HCT116 (cell line): ENCODE measurements at regions of chr1 and their contacts with region 1.

Region 1: GRCh38 chr1:90964444-90965035 is 57.3 kb downstream of the ZNF644 start:
- DNase-seq: peak; percentile 13
- ATAC-seq: peak; percentile 61; the same call in 1 of the 2 replicates
- H3K4me3 ChIP-seq: no peak overlapping the region
- H3K27ac ChIP-seq: no peak overlapping the region
- H3K4me1 ChIP-seq: 0 out of 4 replicates have a peak, but pooled peaks cover 0 to 3% of the 10 kb centered on the region in 2 experiments
- H3K27me3 ChIP-seq: no peaks in the 10 kb centered on the region
- CTCF ChIP-seq: peak; percentile 23 to 55 (median 42); a peak in 4 of 6 replicates
- POLR2A ChIP-seq: no peak
- RAD21 ChIP-seq: peak; percentile 59

Region 2: GRCh38 chr1:90114521-90115141 is 849.9 kb before region 1 on chr1:
- CTCF ChIA-PET with region 1: interaction called, 3 read pairs
- POLR2A ChIA-PET with region 1: no interaction called
- RAD21 ChIA-PET with region 1: no interaction called
- intact Hi-C with region 1: loop called (anchors 5 kb)
- DNase-seq: peak; percentile 56
- ATAC-seq: peak; percentile 74; the same call in 1 of the 2 replicates
- H3K4me3 ChIP-seq: no peak overlapping the region
- H3K27ac ChIP-seq: no peak overlapping the region
- H3K4me1 ChIP-seq: no peaks in the 10 kb centered on the region
- H3K27me3 ChIP-seq: peaks cover 44% of the 10 kb centered on the region
- CTCF ChIP-seq: peak; percentile 53 to 81 (median 69); a peak in 5 of 6 replicates
- POLR2A ChIP-seq: no peak
- RAD21 ChIP-seq: peak; percentile 75

Region 3: GRCh38 chr1:90579212-90579802 is 385.2 kb before region 1 on chr1:
- CTCF ChIA-PET with region 1: interaction called, 13 read pairs
- POLR2A ChIA-PET with region 1: no interaction called
- RAD21 ChIA-PET with region 1: no interaction called
- intact Hi-C with region 1: loop called (anchors 5 kb)
- DNase-seq: peak; percentile 43
- ATAC-seq: peak; percentile 86
- H3K4me3 ChIP-seq: no peak overlapping the region
- H3K27ac ChIP-seq: no peak overlapping the region
- H3K4me1 ChIP-seq: no peaks in the 10 kb centered on the region
- H3K27me3 ChIP-seq: peaks cover 26% of the 10 kb centered on the region
- CTCF ChIP-seq: peak; percentile 42 to 71 (median 46); a peak in 5 of 6 replicates
- POLR2A ChIP-seq: no peak
- RAD21 ChIP-seq: peak; percentile 58

Region 4: GRCh38 chr1:90616395-90616794 is 348.1 kb before region 1 on chr1:
- CTCF ChIA-PET with region 1: interaction called, 6 read pairs
- POLR2A ChIA-PET with region 1: no interaction called
- RAD21 ChIA-PET with region 1: no interaction called
- intact Hi-C with region 1: loop called (anchors 5 kb)
- DNase-seq: peak; percentile 18
- ATAC-seq: peak; percentile 80
- H3K4me3 ChIP-seq: no peak overlapping the region
- H3K27ac ChIP-seq: no peak overlapping the region
- H3K4me1 ChIP-seq: no peaks in the 10 kb centered on the region
- H3K27me3 ChIP-seq: no peaks in the 10 kb centered on the region; the same call in 1 of the 2 replicates
- CTCF ChIP-seq: peak; percentile 17 to 57 (median 56); a peak in 4 of 6 replicates
- POLR2A ChIP-seq: no peak
- RAD21 ChIP-seq: peak; percentile 32; the same call in 1 of the 2 replicates

Region 5: DNA sequence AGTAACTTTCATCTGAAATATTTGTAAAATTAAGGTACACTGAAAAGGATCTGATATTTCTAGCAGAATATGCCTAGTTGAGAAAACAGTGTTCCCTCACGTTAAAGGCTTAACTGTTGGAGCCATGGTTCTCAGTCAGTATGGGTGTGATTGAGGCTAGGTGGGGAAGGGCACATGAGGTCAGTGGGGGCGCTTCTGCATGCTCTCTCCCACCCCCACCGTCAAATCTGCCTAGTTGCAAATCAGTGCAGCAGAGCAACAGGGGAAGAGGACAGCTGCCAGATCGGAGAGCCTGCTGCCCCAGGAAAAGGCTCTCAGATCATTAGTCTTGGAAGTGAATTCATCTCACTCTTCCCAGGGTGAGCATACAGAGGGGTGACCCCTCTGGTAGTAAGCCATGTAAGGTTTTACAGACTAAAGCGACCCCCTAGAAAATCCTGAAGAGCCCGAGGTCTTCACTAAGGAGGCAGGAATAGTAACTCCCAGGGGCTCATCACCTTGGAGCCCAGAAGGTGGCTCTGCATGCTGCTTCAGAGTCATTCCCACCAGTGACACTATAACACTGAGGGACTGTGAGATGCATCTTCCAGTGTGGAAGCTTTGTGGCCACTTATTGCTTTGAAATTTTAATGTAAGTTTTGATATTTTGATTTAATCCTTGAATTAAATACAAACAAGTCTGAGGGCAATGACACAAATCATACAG is 164.4 kb before region 1 on chr1:
- CTCF ChIA-PET with region 1: no interaction called
- POLR2A ChIA-PET with region 1: no interaction called
- RAD21 ChIA-PET with region 1: no interaction called
- intact Hi-C with region 1: no loop called
- DNase-seq: no peak
- ATAC-seq: no peak
- H3K4me3 ChIP-seq: no peak overlapping the region
- H3K27ac ChIP-seq: no peak overlapping the region
- H3K4me1 ChIP-seq: no peaks in the 10 kb centered on the region
- H3K27me3 ChIP-seq: peaks cover 10% of the 10 kb centered on the region; the same call in 1 of the 2 replicates
- CTCF ChIP-seq: no peak
- POLR2A ChIP-seq: no peak
- RAD21 ChIP-seq: no peak; the same call in 1 of the 2 replicates

Region 6: DNA sequence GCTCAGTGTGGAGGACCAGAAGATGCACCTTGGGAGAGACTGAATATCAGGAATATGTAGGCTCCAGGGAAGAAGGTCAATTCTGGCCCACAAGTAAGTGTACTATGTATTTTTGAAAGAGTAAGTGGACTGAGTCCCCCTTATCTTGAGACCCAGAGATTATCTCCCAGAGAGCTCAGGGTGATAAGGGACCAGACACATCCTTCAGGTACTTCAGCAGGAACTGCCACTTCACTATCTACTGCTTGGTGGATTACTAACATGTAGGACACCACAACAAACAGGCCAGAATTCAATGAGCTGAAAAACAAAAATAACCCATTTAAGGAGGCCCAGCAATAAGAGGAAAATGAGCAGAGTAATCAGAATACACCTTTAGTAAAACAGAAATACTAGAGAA is 61.9 kb before region 1 on chr1:
- CTCF ChIA-PET with region 1: no interaction called
- POLR2A ChIA-PET with region 1: no interaction called
- RAD21 ChIA-PET with region 1: no interaction called
- intact Hi-C with region 1: no loop called
- DNase-seq: no peak
- ATAC-seq: no peak
- H3K4me3 ChIP-seq: no peak overlapping the region
- H3K27ac ChIP-seq: no peak overlapping the region
- H3K4me1 ChIP-seq: no peaks in the 10 kb centered on the region
- H3K27me3 ChIP-seq: no peaks in the 10 kb centered on the region
- CTCF ChIP-seq: no peak
- POLR2A ChIP-seq: no peak
- RAD21 ChIP-seq: no peak

Region 7: DNA sequence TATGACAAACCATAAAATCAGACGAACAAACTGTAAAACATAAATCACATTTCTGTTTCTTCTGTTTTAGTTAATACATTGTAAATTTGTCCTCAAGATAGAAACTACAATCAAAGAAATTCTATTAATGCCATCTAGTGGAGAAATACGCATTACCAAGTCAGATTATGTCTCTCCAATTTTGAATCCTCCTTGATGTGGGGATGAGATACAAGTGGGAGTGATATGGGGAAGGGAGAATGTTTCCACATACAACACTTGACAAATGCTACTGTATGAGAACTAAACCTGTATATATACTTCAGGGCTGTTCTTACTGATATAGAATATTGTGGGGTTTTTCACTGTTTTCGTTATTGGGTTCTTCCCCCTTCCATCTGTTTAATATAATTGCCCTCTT is 437.5 kb after region 1 on chr1:
- CTCF ChIA-PET with region 1: no interaction called
- POLR2A ChIA-PET with region 1: no interaction called
- RAD21 ChIA-PET with region 1: no interaction called
- intact Hi-C with region 1: no loop called
- DNase-seq: no peak
- ATAC-seq: no peak
- H3K4me3 ChIP-seq: no peak overlapping the region
- H3K27ac ChIP-seq: no peak overlapping the region
- H3K4me1 ChIP-seq: peaks cover 0 to 3% of the 10 kb centered on the region in 2 experiments; a peak in 1 of 4 replicates
- H3K27me3 ChIP-seq: no peaks in the 10 kb centered on the region
- CTCF ChIP-seq: peak; percentile 34 to 67 (median 57); a peak in 4 of 6 replicates
- POLR2A ChIP-seq: no peak
- RAD21 ChIP-seq: peak; percentile 64

Region 8: DNA sequence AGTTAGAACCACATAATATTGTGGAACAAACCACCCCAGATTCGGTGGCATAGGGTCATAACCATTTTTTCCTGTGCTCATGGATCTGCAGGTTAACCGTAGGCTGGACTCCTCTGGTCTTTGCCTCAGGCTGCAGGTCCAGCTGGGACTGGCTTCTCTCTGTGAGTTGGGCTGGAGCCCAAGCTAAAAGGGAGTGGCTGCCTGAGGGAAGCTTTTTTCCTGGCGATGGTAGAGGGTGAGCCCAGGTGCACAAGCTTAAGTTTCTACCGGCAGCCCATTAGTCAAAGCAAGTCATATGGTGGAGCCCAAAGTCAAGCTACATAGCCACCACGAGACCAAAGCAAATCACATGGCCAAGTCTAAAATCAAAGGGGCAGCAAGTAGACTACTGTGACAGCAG is 1079.1 kb after region 1 on chr1:
- CTCF ChIA-PET with region 1: no interaction called
- POLR2A ChIA-PET with region 1: no interaction called
- RAD21 ChIA-PET with region 1: no interaction called
- intact Hi-C with region 1: no loop called
- DNase-seq: no peak
- ATAC-seq: no peak
- H3K4me3 ChIP-seq: no peak overlapping the region
- H3K27ac ChIP-seq: no peak overlapping the region
- H3K4me1 ChIP-seq: no peaks in the 10 kb centered on the region
- H3K27me3 ChIP-seq: no peaks in the 10 kb centered on the region
- CTCF ChIP-seq: no peak
- POLR2A ChIP-seq: no peak
- RAD21 ChIP-seq: no peak